ENCODE measurements at regions of chr9 and their contacts with region 1.

Region 1: DNA sequence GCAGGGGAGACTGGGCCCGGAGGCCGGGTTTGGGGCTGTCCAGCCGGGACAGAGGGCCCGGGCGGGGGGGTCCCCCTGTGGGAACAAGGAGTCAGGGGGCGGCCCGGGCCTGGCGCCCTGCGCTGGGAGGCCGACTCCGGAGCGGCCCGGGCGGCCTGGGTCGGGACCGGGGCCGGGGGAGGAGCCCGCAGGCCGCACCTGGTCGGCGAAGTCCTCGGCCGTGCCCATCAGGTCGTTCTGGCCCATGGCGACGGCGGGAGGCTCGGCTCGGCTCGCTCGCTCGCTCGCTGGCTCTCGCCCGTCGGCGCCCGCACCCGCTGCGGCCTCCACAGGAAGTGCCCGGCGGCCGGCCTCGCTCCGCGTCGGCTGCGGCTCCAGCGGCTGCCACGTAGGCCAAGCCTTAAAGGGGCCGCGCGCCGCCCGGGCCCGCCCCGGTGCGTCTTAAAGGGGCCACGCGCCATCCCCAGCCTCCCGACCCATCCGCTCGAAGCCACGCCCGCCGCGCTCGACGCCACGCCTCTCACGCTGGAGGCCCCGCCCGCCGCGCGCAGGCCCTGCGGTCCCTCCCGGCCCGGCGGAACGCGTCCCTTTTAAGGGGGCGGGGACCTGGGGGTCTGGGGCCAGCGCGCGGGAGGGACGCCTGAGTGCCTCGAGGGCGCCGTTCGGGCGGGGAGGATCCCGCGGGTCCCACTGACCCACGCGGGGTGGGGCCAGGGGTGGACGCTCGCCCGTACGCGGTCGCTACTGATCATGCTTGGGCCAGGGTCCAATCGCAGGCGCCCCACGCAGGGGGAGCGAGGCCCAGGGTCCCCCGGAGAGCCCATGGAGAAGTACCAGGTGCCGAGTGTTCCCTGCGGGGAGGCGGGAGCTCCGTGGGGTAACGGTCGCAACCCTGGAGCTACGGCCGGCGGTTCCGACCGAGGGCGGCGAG is at the starts of genes STKLD1 and SURF4:
- DNase-seq: peak; percentile 73
- ATAC-seq: peak; percentile 94
- H3K4me3 ChIP-seq: peak within 1 kb of the TSS; percentile 97
- H3K27ac ChIP-seq: peak within 1 kb of the TSS; percentile 78
- H3K4me1 ChIP-seq: peaks cover 18% of the 10 kb centered on the region
- H3K27me3 ChIP-seq: no peaks in the 10 kb centered on the region
- CTCF ChIP-seq: no peak
- EP300 ChIP-seq: no peak
- POLR2A ChIP-seq: peak; percentile 97
- RAD21 ChIP-seq: no peak
- polyA plus RNA-seq, gene STKLD1: 0.24 TPM in 1 of 2 experiments, not detected in the other
- polyA plus RNA-seq, gene SURF4: 6.4 to 12.6 TPM

Region 2: DNA sequence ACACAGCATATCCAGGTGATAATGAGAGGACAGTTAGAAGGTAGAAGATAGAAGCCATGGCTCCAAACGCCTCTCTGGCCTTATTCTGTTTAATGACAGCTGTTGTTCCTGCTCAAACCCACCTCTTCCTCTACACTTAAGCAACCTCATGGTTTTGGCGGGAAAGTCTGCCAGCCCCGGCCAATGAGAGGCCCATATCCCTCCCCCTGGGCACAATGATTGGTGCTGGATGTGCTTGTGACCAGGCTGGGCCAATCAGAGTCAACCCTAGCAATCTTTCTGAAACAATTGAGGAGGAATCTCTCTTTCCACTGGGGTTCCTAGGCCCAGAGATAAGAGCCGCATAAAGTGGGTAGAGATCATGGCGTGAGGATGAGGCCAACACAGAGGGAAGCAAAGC is 402.3 kb before region 1 on chr9:
- CTCF ChIA-PET with region 1: no interaction called
- POLR2A ChIA-PET with region 1: no interaction called
- RAD21 ChIA-PET with region 1: no interaction called
- SMC1A ChIA-PET with region 1: no interaction called
- in situ Hi-C with region 1: no loop called
- intact Hi-C with region 1: no loop called
- DNase-seq: no peak
- ATAC-seq: peak; percentile 24; the same call in 1 of the 3 replicates
- H3K4me3 ChIP-seq: no peak overlapping the region
- H3K27ac ChIP-seq: no peak overlapping the region
- H3K4me1 ChIP-seq: no peaks in the 10 kb centered on the region
- H3K27me3 ChIP-seq: peaks cover 2% of the 10 kb centered on the region in 2 experiments; a peak in 1 of 4 replicates
- CTCF ChIP-seq: no peak
- EP300 ChIP-seq: no peak
- POLR2A ChIP-seq: no peak
- RAD21 ChIP-seq: no peak

Region 3: GRCh38 chr9:133054966-133055365 is 321.0 kb before region 1 on chr9:
- CTCF ChIA-PET with region 1: no interaction called
- POLR2A ChIA-PET with region 1: no interaction called
- RAD21 ChIA-PET with region 1: no interaction called
- SMC1A ChIA-PET with region 1: no interaction called
- in situ Hi-C with region 1: no loop called
- intact Hi-C with region 1: no loop called
- DNase-seq: no peak
- ATAC-seq: no peak
- H3K4me3 ChIP-seq: no peak overlapping the region
- H3K27ac ChIP-seq: no peak overlapping the region
- H3K4me1 ChIP-seq: peaks cover 18% of the 10 kb centered on the region
- H3K27me3 ChIP-seq: no peaks in the 10 kb centered on the region
- CTCF ChIP-seq: no peak
- EP300 ChIP-seq: no peak
- POLR2A ChIP-seq: no peak
- RAD21 ChIP-seq: no peak

Region 4: DNA sequence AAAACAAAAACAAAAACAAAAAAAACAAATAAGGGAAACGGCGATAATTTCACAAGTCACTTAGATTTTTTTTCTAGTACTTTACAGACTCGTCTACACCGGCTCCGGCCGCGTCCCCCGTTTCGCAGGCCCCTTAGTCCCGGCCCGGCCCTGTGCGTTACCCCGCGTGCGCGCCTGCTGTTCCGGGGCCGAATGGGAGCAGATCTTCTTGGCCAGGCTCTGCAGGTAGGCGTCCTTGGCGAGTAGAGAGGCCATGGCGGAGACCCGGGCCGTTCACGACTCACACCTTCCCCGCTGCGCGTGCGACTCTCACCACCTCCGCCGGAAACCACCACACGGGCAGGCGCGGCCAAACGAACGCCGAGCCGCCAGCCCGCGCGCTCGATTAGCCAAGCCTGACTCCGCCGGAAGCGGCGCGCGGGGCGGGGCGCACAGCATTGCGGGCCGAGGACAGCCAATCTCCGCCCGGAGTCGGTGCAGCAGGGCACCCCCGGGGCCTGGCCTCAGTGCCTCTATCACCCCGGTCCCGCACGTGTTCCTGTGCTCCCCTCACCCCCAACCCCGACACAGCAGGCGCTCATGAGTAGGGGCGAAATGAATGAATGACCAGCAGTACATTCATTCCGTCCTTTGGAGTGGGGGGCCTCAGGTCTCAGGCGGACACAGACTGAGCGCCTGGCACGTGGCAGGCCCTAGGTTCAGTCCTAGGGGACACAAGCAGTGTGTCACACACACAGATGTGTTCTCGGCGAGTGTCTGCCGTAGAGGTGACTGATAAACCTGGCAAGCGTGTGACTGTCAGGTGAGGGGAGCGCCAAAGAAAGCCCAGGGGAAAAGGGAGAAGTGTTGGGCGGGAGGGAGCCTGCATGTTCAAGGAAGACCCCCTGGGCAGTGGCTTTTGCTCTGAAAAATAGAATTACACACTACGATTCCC is 39.8 kb before region 1 on chr9 and contains the start of gene SURF6:
- CTCF ChIA-PET with region 1: no interaction called
- POLR2A ChIA-PET with region 1: interaction called, 8 read pairs
- RAD21 ChIA-PET with region 1: interaction called, 3 read pairs
- SMC1A ChIA-PET with region 1: no interaction called
- in situ Hi-C with region 1: no loop called
- intact Hi-C with region 1: loop called (anchors 5 kb)
- DNase-seq: peak; percentile 69
- ATAC-seq: peak; percentile 98
- H3K4me3 ChIP-seq: peak within 1 kb of the TSS; percentile 98
- H3K27ac ChIP-seq: peak within 1 kb of the TSS; percentile 82
- H3K4me1 ChIP-seq: peaks cover 9% of the 10 kb centered on the region
- H3K27me3 ChIP-seq: no peaks in the 10 kb centered on the region
- CTCF ChIP-seq: no peak
- EP300 ChIP-seq: no peak
- POLR2A ChIP-seq: peak; percentile 90
- RAD21 ChIP-seq: no peak
- polyA plus RNA-seq, gene SURF6: 2.2 to 3.0 TPM

Region 5: DNA sequence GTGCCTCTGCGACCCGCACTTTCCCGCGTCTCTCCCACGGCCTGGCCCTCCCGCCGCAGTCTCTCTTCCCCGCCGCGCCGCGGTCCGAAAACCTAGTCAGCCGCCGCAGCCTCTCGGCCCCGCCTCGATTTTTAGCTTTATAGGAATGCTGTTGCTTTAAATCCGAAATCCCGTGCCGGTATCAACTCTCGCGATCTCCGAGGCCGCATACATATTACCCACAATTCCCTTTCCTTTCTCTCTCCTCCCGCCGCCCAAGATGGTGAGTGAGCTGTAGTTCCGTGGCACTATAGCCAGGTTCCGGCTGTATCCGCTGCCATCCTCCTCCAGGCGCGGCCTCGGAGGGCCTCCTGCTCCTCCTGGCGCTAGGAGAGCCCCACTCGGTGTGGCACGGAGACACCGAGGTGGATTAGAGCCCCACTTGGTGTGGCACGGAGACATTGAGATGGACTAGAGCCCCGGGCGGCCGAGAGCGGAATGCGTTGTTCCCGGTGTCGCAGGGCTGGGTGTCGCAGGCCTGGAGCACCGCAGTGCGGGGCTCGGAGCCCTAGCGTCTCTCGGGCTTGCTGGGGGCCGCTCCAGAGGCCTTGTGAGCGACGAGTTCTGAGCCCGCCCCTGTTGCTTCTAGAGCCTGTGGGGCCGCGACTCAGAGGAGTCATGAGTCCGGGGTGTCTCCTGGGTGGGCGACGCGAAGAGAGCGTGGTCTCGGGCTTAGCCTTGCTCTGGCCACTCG is 27.8 kb before region 1 on chr9 and contains the starts of genes MED22 and RPL7A:
- CTCF ChIA-PET with region 1: interaction called, 5 read pairs
- POLR2A ChIA-PET with region 1: interaction called, 13 read pairs
- RAD21 ChIA-PET with region 1: interaction called, 4 read pairs
- SMC1A ChIA-PET with region 1: interaction called, 4 read pairs
- in situ Hi-C with region 1: no loop called
- intact Hi-C with region 1: no loop called
- DNase-seq: peak; percentile 91
- ATAC-seq: peak; percentile 84
- H3K4me3 ChIP-seq: peak within 1 kb of the TSS; percentile 100
- H3K27ac ChIP-seq: peak within 1 kb of the TSS; percentile 96
- H3K4me1 ChIP-seq: peaks cover 12% of the 10 kb centered on the region
- H3K27me3 ChIP-seq: no peaks in the 10 kb centered on the region
- CTCF ChIP-seq: no peak
- EP300 ChIP-seq: no peak
- POLR2A ChIP-seq: peak; percentile 99
- RAD21 ChIP-seq: no peak
- polyA plus RNA-seq, gene MED22: 1.4 to 3.4 TPM
- polyA plus RNA-seq, gene RPL7A: 3,258 to 3,500 TPM

Region 6: GRCh38 chr9:133356391-133357091 is 19.4 kb before region 1 on chr9 and contains the starts of genes SURF1 and SURF2:
- CTCF ChIA-PET with region 1: interaction called, 16 read pairs
- POLR2A ChIA-PET with region 1: interaction called, 10 read pairs
- RAD21 ChIA-PET with region 1: interaction called, 3 read pairs
- SMC1A ChIA-PET with region 1: interaction called, 5 read pairs
- in situ Hi-C with region 1: no loop called
- intact Hi-C with region 1: no loop called
- DNase-seq: no peak
- ATAC-seq: peak; percentile 92
- H3K4me3 ChIP-seq: peak within 1 kb of the TSS; percentile 91
- H3K27ac ChIP-seq: peak within 1 kb of the TSS; percentile 43
- H3K4me1 ChIP-seq: no peaks in the 10 kb centered on the region; the same call in none of the 2 replicates
- H3K27me3 ChIP-seq: no peaks in the 10 kb centered on the region
- CTCF ChIP-seq: peak in 2 of 3 experiments; percentile 15 to 20; a peak in 2 of 6 replicates
- EP300 ChIP-seq: no peak
- POLR2A ChIP-seq: peak; percentile 87
- RAD21 ChIP-seq: no peak
- polyA plus RNA-seq, gene SURF1: 19.2 to 34.6 TPM
- polyA plus RNA-seq, gene SURF2: 4.0 to 7.6 TPM

Region 7: GRCh38 chr9:133417541-133418461 is 41.8 kb after region 1 on chr9 and contains the start of gene REXO4:
- CTCF ChIA-PET with region 1: interaction called, 3 read pairs
- POLR2A ChIA-PET with region 1: interaction called, 4 read pairs
- RAD21 ChIA-PET with region 1: no interaction called
- SMC1A ChIA-PET with region 1: interaction called, 3 read pairs
- in situ Hi-C with region 1: no loop called
- intact Hi-C with region 1: loop called (anchors 5 kb)
- DNase-seq: peak; percentile 73
- ATAC-seq: peak; percentile 74
- H3K4me3 ChIP-seq: peak within 1 kb of the TSS; percentile 89
- H3K27ac ChIP-seq: peak within 1 kb of the TSS; percentile 90
- H3K4me1 ChIP-seq: peaks cover 51% of the 10 kb centered on the region
- H3K27me3 ChIP-seq: no peaks in the 10 kb centered on the region
- CTCF ChIP-seq: no peak
- EP300 ChIP-seq: no peak
- POLR2A ChIP-seq: peak; percentile 87
- RAD21 ChIP-seq: no peak
- polyA plus RNA-seq, gene REXO4: 2.7 to 8.4 TPM

Region 8: DNA sequence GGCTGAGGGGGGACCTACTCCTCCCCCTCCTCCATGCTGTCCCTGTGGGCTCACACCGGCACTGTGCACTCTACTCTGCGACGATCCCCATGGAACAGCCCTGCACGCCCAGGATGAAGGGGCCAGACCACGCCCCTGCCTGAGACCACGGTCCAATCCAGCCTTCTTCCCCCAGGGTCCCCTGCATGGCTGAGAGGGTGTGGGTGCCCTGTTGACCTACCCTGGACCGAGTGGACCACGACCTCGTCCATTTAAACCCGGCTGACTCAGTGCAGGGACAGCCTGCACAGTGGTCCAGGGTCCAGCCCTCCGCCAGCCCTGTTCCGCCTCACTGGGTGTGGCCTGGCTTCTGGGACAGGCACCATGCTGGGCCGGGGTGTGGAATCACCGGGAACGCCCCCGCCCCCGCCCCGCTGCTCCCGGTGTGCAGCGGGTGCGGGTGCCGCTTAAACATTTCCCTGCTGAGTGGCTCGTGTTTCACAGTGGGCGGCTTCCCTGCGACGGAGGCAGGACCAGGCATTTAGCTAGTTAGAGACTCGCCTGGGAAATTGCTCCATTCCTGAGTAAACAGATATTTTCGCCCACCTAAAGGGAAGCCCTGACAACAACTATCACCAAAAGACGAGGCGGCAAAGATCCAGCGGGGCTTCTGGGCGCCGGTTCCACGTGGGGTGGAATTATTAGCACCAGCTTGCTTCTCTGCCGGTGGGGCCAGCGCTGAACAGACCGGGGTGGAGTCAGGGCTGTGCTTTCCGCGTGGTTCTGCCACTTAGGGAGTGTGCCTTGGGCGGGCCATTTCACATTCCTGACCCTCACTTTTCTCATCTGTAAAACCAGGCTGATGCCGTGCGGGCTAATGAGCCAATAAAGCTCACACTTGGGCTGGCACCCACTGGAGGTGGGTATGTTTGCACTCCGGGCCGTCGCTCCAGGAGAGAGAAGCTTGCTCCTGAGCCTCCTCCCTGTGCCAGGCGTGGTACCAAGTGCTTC is 282.7 kb after region 1 on chr9:
- CTCF ChIA-PET with region 1: no interaction called
- POLR2A ChIA-PET with region 1: no interaction called
- RAD21 ChIA-PET with region 1: no interaction called
- SMC1A ChIA-PET with region 1: no interaction called
- in situ Hi-C with region 1: no loop called
- intact Hi-C with region 1: no loop called
- DNase-seq: no peak
- ATAC-seq: no peak
- H3K4me3 ChIP-seq: no peak overlapping the region
- H3K27ac ChIP-seq: no peak overlapping the region
- H3K4me1 ChIP-seq: no peaks in the 10 kb centered on the region
- H3K27me3 ChIP-seq: peaks cover 7 to 9% of the 10 kb centered on the region in 2 experiments; a peak in 3 of 4 replicates
- CTCF ChIP-seq: no peak
- EP300 ChIP-seq: no peak
- POLR2A ChIP-seq: no peak
- RAD21 ChIP-seq: no peak